Endothelial cell of umbilical vein (primary cell): ENCODE measurements at regions of chr22 and their contacts with region 1.

Region 1: DNA sequence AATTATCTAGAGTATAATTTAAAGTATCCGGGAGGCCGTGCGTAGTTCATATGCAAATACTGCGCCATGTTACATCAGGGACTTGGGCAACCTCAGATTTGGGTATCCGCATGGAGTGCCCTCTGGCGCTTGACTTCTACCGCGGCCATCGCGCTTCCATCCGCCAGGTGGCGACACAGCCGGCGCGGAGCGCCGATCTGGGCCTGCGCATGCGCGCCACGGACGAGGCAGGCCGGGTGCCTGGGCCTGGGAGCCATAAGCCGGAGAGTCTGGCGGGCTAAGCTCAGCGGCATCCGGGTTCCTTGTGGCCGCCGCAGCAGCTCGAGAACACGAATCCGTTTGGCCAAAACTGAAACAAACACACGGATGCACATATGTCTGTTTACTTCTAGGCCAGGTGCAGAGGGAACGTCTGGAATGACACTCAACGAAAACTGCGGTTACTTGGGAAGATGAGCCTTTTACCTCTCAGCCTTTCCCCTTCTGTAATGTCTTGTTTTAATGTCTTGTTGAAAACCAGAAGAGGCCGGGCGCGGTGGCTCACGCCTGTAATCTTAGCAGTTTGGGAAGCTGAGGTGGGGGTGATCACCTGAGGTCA is 21.9 kb downstream of the SNU13 start:
- DNase-seq: peak; percentile 94
- H3K4me3 ChIP-seq: peak overlapping the region in 2 of 3 experiments; percentile 32 to 51
- H3K27ac ChIP-seq: peak overlapping the region; percentile 87
- H3K4me1 ChIP-seq: peaks cover 15% of the 10 kb centered on the region
- H3K27me3 ChIP-seq: no peaks in the 10 kb centered on the region
- CTCF ChIP-seq: peak; percentile 100
- POLR2A ChIP-seq: peak; percentile 90

Region 2: DNA sequence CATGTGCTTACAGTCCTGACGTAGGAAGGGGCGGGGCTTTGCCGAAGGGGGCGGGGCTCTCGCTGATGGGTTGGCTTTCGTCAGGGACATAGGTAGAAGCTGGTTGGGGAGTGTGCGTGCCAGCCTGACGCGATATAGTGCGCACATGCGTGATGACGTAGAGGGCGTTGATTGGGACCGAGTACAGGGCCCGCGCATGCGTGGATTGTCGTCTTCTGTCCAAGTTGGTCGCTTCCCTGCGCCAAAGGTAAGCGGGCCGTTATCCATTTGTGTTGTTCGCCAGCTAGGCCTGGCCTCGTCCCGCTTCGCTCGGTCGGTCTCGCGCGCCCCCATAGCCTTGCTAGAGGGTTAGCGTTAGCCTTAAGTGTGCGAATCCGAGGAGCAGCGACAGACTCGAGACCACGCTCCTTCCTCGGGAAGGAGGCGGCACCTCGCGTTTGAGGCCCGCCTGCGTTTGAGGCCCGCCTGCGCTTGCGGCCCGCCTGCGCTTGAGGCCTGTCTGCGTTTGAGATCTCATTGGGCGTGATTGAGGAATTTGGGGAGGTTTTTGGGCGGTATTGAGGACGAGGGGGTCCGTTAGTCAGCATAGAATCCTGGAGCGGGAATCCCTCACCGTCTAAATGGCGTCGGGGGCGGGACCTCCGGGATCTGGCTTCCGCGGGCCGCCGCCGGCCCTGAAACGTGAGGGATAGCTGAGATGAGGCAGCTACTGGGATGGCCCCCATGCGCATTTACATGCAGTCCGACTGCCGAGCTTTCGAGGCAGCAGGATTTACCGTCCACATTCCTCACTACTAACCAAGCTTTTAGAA is 45.5 kb before region 1 on chr22 and contains the start of gene XRCC6:
- CTCF ChIA-PET with region 1: interaction called, 11 read pairs
- POLR2A ChIA-PET with region 1: interaction called, 5 read pairs
- dilution Hi-C with region 1: no loop called
- intact Hi-C with region 1: loop called (anchors 5 kb)
- DNase-seq: peak; percentile 100
- H3K4me3 ChIP-seq: peak within 1 kb of the TSS; percentile 80 to 86 (median 86)
- H3K27ac ChIP-seq: peak within 1 kb of the TSS; percentile 89
- H3K4me1 ChIP-seq: peaks cover 25% of the 10 kb centered on the region
- H3K27me3 ChIP-seq: no peaks in the 10 kb centered on the region
- CTCF ChIP-seq: no peak
- POLR2A ChIP-seq: peak; percentile 96
- total RNA-seq, gene XRCC6: 309 and 313 TPM in 2 replicates

Region 3: GRCh38 chr22:41650821-41651220 is 15.9 kb before region 1 on chr22:
- CTCF ChIA-PET with region 1: interaction called, 10 read pairs
- POLR2A ChIA-PET with region 1: no interaction called
- dilution Hi-C with region 1: no loop called
- intact Hi-C with region 1: no loop called
- DNase-seq: no peak
- H3K4me3 ChIP-seq: no peak overlapping the region
- H3K27ac ChIP-seq: no peak overlapping the region
- H3K4me1 ChIP-seq: peaks cover 7% of the 10 kb centered on the region
- H3K27me3 ChIP-seq: no peaks in the 10 kb centered on the region
- CTCF ChIP-seq: no peak
- POLR2A ChIP-seq: no peak

Region 4: GRCh38 chr22:41688365-41689211 is 21.8 kb after region 1 on chr22 and contains the start of gene SNU13:
- CTCF ChIA-PET with region 1: interaction called, 28 read pairs
- POLR2A ChIA-PET with region 1: interaction called, 4 read pairs
- dilution Hi-C with region 1: no loop called
- intact Hi-C with region 1: loop called (anchors 1 kb)
- DNase-seq: peak; percentile 95
- H3K4me3 ChIP-seq: peak within 1 kb of the TSS; percentile 59 to 76 (median 67)
- H3K27ac ChIP-seq: peak within 1 kb of the TSS; percentile 92
- H3K4me1 ChIP-seq: peaks cover 9% of the 10 kb centered on the region
- H3K27me3 ChIP-seq: no peaks in the 10 kb centered on the region
- CTCF ChIP-seq: no peak
- POLR2A ChIP-seq: peak; percentile 89
- total RNA-seq, gene SNU13: 138 TPM in 2 replicates

Region 5: DNA sequence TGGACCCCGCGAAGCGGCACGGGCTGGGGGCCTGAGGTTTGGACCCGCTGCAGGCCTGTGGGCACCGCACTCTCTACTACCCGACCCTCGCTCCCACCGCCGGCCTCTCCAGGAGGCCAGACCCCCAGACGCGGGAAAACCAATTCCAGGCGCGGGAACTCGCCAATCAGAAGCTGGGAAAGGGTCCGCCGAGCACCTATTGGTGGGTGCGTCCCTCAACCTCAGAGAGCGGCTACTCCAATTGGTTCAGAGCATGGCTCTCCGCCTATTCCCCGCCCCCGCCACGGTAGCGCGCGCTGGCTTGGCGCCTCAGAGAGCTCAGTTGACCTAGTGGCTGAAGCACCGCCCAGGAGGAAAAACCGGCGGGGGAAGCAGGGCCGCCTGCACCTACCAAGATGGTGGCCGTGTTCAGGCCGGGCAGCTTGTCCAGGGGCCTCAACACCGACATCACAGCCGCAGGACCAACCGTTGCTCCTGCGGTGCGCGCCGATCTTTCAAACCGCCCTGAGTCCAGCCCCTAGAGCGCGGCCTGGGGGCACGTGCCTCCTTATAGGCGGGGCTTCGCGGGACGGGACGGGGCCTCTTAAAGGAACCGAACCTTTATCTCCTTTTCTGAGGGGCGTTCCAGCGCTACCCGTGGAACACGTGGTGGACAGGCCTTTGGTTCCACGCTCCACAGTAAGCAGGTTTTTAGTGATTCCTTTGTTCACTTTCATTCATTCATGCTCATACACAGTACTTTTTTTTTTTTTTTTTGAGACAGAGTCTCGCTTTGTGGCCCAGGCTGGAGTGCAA is 280.1 kb after region 1 on chr22 and contains the start of gene CENPM:
- CTCF ChIA-PET with region 1: interaction called, 10 read pairs
- POLR2A ChIA-PET with region 1: no interaction called
- dilution Hi-C with region 1: no loop called
- intact Hi-C with region 1: no loop called
- DNase-seq: peak; percentile 96
- H3K4me3 ChIP-seq: peak within 1 kb of the TSS; percentile 39 to 85 (median 57)
- H3K27ac ChIP-seq: peak within 1 kb of the TSS; percentile 44
- H3K4me1 ChIP-seq: peaks cover 33% of the 10 kb centered on the region
- H3K27me3 ChIP-seq: no peaks in the 10 kb centered on the region
- CTCF ChIP-seq: no peak
- POLR2A ChIP-seq: no peak
- total RNA-seq, gene CENPM: 30.4 and 34.5 TPM in 2 replicates